CD8-positive, alpha-beta memory T cell (primary cell): ENCODE measurements at regions of chr2 and their contacts with region 1.

Region 1: GRCh38 chr2:157336137-157337010 is 10.8 kb upstream of the ERMN start:
- DNase-seq: peak; percentile 16 to 50 (median 39)
- H3K4me3 ChIP-seq: peak overlapping the region; percentile 12
- H3K4me3 Mint-ChIP-seq: peak overlapping the region in 5 of 7 donors; percentile 22 to 82 (median 68)
- H3K27ac ChIP-seq: no peak overlapping the region
- H3K27ac Mint-ChIP-seq: peak overlapping the region in 7 of 8 donors; percentile 18 to 75 (median 59)
- H3K4me1 ChIP-seq: peaks cover 44% of the 10 kb centered on the region
- H3K4me1 Mint-ChIP-seq: peaks cover 45 to 79% (median 64%) of the 10 kb centered on the region in 3 donors
- H3K27me3 ChIP-seq: no peaks in the 10 kb centered on the region
- H3K27me3 Mint-ChIP-seq: no peaks in the 10 kb centered on the region

Region 2: DNA sequence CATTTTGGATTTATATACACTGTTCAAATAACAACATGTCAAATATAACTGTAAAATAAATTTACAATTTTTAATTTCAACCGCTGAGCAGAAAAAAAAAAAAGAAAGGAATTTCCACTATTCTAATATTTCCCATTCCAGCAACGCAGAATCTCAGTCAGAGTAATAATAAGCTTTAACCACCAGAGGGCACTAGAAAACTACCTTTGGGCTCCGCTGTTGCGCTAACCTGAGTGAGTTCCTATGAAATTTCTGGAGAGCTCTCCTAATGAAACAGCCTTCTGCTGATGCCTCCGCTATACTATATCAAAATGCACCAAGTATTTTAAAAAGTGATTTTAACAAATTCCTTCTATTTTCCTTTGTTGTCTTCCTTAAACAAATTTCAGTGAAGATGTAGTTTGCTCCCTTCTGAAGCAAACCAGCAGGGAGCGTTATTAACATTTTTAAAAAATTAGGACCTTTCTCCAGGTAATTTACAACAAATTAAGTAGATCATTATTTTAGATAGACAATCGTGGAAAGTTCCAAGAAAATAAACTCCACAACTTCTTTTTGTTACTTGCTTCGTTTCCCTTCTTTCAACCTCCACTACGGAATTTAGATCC is 33.8 kb before region 1 on chr2:
- CTCF ChIA-PET with region 1: interaction called, 59 read pairs
- POLR2A ChIA-PET with region 1: no interaction called
- DNase-seq: peak in 4 of 5 donors; percentile 14 to 56 (median 54)
- H3K4me3 ChIP-seq: no peak overlapping the region
- H3K4me3 Mint-ChIP-seq: no peak overlapping the region
- H3K27ac ChIP-seq: no peak overlapping the region
- H3K27ac Mint-ChIP-seq: no peak overlapping the region
- H3K4me1 ChIP-seq: no peaks in the 10 kb centered on the region
- H3K4me1 Mint-ChIP-seq: peaks cover 2 to 11% (median 10%) of the 10 kb centered on the region in 3 donors
- H3K27me3 ChIP-seq: no peaks in the 10 kb centered on the region
- H3K27me3 Mint-ChIP-seq: peaks cover 4% of the 10 kb centered on the region in 2 donors

Region 3: DNA sequence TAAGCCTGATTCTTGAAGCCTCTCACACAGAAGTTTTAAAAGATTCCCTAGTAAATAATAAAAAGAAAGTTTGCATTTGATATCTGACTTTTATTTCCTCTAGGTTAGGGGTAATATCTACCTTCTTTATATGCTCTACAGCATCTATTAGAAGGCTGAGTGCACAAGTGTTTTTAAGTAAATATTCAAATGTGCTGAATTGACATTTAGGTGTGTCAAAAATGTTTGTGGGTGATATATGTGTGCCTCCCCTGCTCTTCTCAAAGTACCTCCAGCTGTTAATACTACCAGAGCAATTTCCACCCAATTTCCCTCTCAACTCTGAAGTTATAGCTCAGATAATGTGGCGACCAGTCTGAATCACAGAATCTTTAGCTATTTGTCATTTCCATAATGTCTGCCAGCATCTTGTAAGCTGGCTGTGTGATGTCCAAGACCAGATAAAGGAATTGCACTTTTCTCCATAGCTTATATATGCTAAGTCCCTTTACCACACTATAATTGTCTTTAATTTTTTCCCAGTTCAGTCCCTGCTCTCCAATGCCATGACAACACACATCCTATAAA is 13.7 kb after region 1 on chr2:
- CTCF ChIA-PET with region 1: interaction called, 24 read pairs
- POLR2A ChIA-PET with region 1: no interaction called
- DNase-seq: no peak
- H3K4me3 ChIP-seq: no peak overlapping the region
- H3K4me3 Mint-ChIP-seq: no peak overlapping the region
- H3K27ac ChIP-seq: no peak overlapping the region
- H3K27ac Mint-ChIP-seq: peak overlapping the region in 1 of 8 donors; percentile 24
- H3K4me1 ChIP-seq: no peaks in the 10 kb centered on the region
- H3K4me1 Mint-ChIP-seq: peaks cover 15 to 44% (median 40%) of the 10 kb centered on the region in 3 donors
- H3K27me3 ChIP-seq: no peaks in the 10 kb centered on the region
- H3K27me3 Mint-ChIP-seq: no peaks in the 10 kb centered on the region

Region 4: DNA sequence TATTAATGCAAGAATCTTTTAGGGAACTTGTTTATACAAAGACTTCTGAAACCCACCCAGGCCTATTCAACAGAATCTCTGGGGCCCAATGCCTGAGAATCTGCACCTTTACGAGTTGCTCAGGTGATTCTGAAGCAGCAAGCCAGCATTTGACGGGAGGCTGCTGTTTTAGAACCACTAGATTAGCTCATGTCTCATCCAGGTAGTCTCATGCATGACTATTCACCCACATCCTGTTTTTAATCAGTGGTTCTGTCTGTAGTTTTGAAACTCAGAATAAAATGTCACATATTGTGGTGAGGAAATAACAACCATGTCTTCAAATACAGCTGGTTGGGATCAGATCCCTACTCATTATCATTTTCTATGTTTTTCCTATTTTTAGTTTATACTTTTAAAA is 68.0 kb after region 1 on chr2:
- CTCF ChIA-PET with region 1: interaction called, 23 read pairs
- POLR2A ChIA-PET with region 1: interaction called, 6 read pairs
- DNase-seq: peak; percentile 42 to 89 (median 82)
- H3K4me3 ChIP-seq: peak overlapping the region; percentile 35
- H3K4me3 Mint-ChIP-seq: peak overlapping the region; percentile 30 to 77 (median 53)
- H3K27ac ChIP-seq: peak overlapping the region; percentile 71
- H3K27ac Mint-ChIP-seq: peak overlapping the region; percentile 94 to 99 (median 98)
- H3K4me1 ChIP-seq: peaks cover 52% of the 10 kb centered on the region
- H3K4me1 Mint-ChIP-seq: peaks cover 69 to 80% (median 78%) of the 10 kb centered on the region in 3 donors
- H3K27me3 ChIP-seq: no peaks in the 10 kb centered on the region
- H3K27me3 Mint-ChIP-seq: no peaks in the 10 kb centered on the region

Region 5: DNA sequence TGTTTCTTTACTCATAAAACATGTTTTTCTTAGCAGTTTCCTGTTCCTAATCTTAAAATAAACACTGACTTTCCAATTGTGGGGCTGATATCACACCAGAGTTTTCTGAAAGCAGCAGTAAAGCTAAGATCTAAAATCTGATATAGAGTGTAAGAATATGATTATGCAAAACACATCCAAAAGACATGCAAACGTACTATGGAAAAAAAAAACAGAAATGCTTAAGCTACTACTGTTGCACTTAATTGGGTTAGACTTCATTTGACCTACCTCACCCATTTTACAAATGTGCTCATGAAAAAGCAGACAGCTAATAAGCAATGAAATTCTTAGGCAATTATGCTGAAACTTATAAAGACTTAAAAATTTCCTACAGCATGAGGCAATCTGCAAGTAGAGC is 97.0 kb after region 1 on chr2:
- CTCF ChIA-PET with region 1: interaction called, 27 read pairs
- POLR2A ChIA-PET with region 1: interaction called, 21 read pairs
- DNase-seq: no peak
- H3K4me3 ChIP-seq: peak overlapping the region; percentile 58
- H3K4me3 Mint-ChIP-seq: peak overlapping the region; percentile 71 to 99 (median 96)
- H3K27ac ChIP-seq: no peak overlapping the region
- H3K27ac Mint-ChIP-seq: peak overlapping the region; percentile 72 to 99 (median 92)
- H3K4me1 ChIP-seq: peaks cover 66% of the 10 kb centered on the region
- H3K4me1 Mint-ChIP-seq: peaks cover 86 to 97% (median 88%) of the 10 kb centered on the region in 3 donors
- H3K27me3 ChIP-seq: no peaks in the 10 kb centered on the region
- H3K27me3 Mint-ChIP-seq: no peaks in the 10 kb centered on the region

Region 6: DNA sequence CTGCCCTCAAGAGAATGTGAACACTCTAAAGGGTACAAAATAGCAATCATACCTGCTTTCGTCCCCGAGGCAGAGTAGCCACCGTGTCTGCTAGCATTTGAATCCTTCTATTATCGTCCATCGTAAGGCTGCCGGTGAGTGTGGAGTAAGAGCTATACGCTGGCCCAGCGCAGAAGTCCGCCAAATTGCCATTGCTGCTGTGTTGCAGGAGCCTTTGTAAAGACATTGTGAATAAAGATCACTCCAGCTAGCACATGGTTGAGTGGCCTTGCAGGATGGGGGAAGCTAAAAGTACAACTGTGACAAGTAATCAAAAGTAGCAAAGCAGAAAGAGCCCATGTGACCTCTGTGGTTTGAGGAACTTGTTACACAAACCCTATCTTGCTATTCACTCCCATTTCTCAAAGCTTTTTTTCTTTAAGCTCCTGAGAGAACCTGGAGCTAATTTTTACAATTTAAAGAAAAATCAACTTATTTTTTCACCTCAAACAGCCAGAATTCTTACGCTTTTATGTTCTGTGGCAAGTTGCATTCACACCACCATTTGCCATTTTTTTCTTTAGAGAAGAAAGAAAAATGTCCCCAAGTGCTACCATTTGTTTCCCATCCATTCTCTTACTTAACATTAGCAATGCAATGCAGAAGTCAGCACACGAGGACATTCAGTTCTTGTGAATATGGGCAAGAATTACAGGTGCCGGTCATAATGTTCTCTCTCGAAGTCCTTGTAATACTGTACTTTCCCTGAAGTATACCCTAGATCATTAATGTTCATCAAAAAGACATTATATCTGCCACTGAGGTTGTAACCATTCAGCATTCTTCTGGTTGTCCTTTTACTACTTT is 107.6 kb after region 1 on chr2 and contains the start of gene CYTIP:
- CTCF ChIA-PET with region 1: interaction called, 27 read pairs
- POLR2A ChIA-PET with region 1: interaction called, 21 read pairs
- DNase-seq: peak; percentile 19 to 80 (median 65)
- H3K4me3 ChIP-seq: peak within 1 kb of the TSS; percentile 93
- H3K4me3 Mint-ChIP-seq: peak within 1 kb of the TSS; percentile 93 to 99 (median 96)
- H3K27ac ChIP-seq: peak within 1 kb of the TSS; percentile 84
- H3K27ac Mint-ChIP-seq: peak within 1 kb of the TSS; percentile 92 to 98 (median 94)
- H3K4me1 ChIP-seq: peaks cover 38% of the 10 kb centered on the region
- H3K4me1 Mint-ChIP-seq: peaks cover 44 to 49% (median 47%) of the 10 kb centered on the region in 3 donors
- H3K27me3 ChIP-seq: no peaks in the 10 kb centered on the region
- H3K27me3 Mint-ChIP-seq: no peaks in the 10 kb centered on the region
- total RNA-seq, gene CYTIP: 195 to 202 TPM